SK-N-SH (cell line): ENCODE measurements at regions of chr10 and their contacts with region 1.

Region 1: DNA sequence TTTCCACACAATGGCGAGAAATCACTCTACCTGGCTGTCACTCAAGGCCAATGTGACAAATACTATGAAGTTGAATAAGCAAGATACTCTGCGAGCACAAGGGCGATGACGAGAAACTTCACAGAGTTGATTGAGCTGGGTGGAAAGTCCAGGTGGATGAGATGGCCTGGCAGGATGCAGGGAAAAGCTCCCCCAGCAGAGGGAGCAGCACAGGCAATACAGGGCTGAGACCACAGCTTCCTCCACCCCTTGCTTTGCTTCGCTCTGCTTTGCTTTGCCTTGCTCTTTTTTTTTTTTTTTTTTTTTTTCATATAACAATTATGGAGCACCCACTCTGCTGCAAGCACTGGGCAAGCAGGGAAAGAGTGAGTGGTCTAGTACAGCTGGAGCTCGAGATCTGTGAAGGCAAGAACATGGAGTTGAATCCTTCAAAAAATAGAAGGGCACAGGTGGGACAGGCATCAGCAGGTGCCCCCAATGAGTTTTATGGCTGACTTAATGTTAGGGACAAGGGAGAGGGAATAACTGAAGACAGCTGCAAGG is 88.3 kb downstream of the CABCOCO1 start:
- DNase-seq: peak; percentile 20
- H3K4me3 ChIP-seq: no peak overlapping the region
- H3K27ac ChIP-seq: no peak overlapping the region
- H3K4me1 ChIP-seq: peaks cover 26 to 40% of the 10 kb centered on the region in 2 experiments; a peak in 3 of 4 replicates
- H3K27me3 ChIP-seq: no peaks in the 10 kb centered on the region
- CTCF ChIP-seq: peak; percentile 66
- EP300 ChIP-seq: no peak
- RAD21 ChIP-seq: peak; percentile 64

Region 2: DNA sequence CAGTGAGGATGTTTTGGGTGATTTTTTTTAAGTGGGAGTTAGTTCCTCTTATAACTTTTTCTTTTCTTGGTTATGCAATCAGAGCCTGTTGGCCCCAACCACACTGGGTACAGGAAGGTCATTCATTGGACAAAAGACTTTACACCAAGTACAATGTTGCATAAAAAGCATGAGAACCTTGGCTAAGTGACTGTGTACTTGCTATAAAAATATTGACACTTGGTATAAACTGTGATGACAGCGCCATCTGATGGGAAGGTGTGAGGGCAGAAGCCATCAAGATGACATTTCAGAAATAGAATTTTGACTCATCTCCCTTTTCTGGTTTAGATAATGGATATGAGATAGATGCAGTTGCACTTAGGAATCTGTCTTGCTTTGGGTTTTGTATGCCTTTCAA is 1718.3 kb before region 1 on chr10:
- CTCF ChIA-PET with region 1: no interaction called
- POLR2A ChIA-PET with region 1: no interaction called
- DNase-seq: peak; percentile 37
- H3K4me3 ChIP-seq: no peak overlapping the region
- H3K27ac ChIP-seq: no peak overlapping the region
- H3K4me1 ChIP-seq: no peaks in the 10 kb centered on the region
- H3K27me3 ChIP-seq: no peaks in the 10 kb centered on the region
- CTCF ChIP-seq: peak; percentile 53
- EP300 ChIP-seq: no peak
- RAD21 ChIP-seq: peak; percentile 80

Region 3: DNA sequence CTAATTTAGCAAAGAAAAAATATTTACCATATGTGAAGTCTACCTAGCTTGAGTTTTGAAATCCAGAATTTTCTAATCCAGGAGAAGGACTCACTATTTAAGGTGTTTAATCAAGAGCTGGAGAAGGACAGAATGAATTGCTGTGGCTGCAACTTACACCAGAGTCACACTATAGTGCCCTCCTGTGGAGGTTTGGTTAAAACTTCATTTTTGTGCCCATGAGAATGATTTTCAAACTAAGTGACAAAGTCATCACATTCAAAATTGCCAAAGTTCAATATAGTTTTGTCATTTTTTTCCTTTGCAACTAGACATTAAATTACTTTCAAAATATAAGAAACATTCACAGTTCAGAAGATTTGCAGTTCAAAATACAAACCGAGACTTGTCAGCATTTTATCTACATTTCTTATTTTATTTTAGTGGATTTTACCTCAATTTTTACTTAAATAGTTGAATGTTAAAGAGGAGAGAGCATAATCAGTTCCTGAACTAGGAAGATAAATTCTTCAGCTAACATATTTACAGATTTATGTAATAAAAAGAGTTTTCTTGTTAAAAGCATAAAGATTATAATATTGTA is 17.6 kb before region 1 on chr10:
- CTCF ChIA-PET with region 1: interaction called, 44 read pairs
- POLR2A ChIA-PET with region 1: no interaction called
- DNase-seq: peak; percentile 29
- H3K4me3 ChIP-seq: no peak overlapping the region
- H3K27ac ChIP-seq: peak overlapping the region in 1 of 2 experiments; percentile 58; a peak in 1 of 4 replicates
- H3K4me1 ChIP-seq: peaks cover 0 to 9% of the 10 kb centered on the region in 2 experiments; a peak in 1 of 4 replicates
- H3K27me3 ChIP-seq: no peaks in the 10 kb centered on the region
- CTCF ChIP-seq: peak; percentile 77
- EP300 ChIP-seq: no peak
- RAD21 ChIP-seq: peak; percentile 85

Region 4: DNA sequence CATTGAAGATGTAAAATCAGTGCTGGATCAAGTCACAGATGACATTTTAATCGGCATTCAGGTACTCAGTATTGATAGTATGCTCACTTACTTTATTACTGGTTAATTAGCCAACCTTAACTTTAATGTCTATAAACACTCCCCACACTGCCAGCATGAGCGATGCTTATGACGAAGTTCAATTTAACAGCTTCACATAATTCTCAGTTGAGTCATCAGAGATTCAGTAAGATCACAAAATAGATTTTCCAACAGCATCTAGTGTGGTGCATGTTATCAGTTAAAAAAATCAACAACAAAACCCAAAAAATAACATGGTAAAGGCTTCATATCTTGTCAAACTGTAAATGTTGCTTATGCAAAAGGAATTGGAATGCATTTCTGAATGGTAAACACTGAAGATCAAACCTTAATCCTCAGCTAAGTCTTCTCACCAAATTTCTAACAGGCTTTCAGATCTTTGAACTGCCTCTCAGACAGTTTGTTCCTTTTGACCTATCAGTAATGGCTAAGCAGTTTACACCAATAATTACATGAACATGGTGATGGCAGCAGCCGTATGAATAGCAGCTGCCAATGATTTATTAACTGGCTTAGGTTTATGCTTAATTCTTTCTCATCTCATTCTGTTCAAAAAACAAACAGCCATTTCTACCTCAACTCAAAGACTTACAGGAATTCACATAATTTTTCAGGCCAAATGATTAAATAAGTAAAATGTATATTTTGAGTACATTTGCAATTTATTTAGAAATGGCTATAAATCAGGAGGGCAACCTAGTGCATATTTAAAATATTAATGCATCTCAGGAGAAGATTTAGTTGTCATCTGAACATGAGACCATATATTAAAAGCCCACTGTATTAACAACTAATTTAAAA is 10.2 kb after region 1 on chr10:
- CTCF ChIA-PET with region 1: interaction called, 14 read pairs
- POLR2A ChIA-PET with region 1: no interaction called
- DNase-seq: no peak
- H3K4me3 ChIP-seq: no peak overlapping the region
- H3K27ac ChIP-seq: peak overlapping the region; percentile 70 to 99
- H3K4me1 ChIP-seq: peaks cover 26 to 43% of the 10 kb centered on the region in 2 experiments; a peak in 3 of 4 replicates
- H3K27me3 ChIP-seq: no peaks in the 10 kb centered on the region
- CTCF ChIP-seq: no peak
- EP300 ChIP-seq: peak; percentile 13 to 75; a peak in 2 of 4 replicates
- RAD21 ChIP-seq: no peak

Region 5: GRCh38 chr10:61774031-61774430 is 23.0 kb after region 1 on chr10:
- CTCF ChIA-PET with region 1: no interaction called
- POLR2A ChIA-PET with region 1: no interaction called
- DNase-seq: no peak
- H3K4me3 ChIP-seq: no peak overlapping the region
- H3K27ac ChIP-seq: no peak overlapping the region
- H3K4me1 ChIP-seq: peaks cover 0 to 5% of the 10 kb centered on the region in 2 experiments; a peak in 2 of 4 replicates
- H3K27me3 ChIP-seq: no peaks in the 10 kb centered on the region
- CTCF ChIP-seq: no peak
- EP300 ChIP-seq: no peak
- RAD21 ChIP-seq: no peak

Region 6: GRCh38 chr10:61835069-61835945 is 84.3 kb after region 1 on chr10:
- CTCF ChIA-PET with region 1: interaction called, 13 read pairs
- POLR2A ChIA-PET with region 1: no interaction called
- DNase-seq: peak; percentile 15
- H3K4me3 ChIP-seq: peak overlapping the region in 1 of 2 experiments; percentile 39; a peak in 1 of 4 replicates
- H3K27ac ChIP-seq: peak overlapping the region; percentile 89 to 93
- H3K4me1 ChIP-seq: peaks cover 21 to 29% of the 10 kb centered on the region in 2 experiments
- H3K27me3 ChIP-seq: no peaks in the 10 kb centered on the region
- CTCF ChIP-seq: peak; percentile 69
- EP300 ChIP-seq: peak in 1 of 2 experiments; percentile 65; a peak in 2 of 4 replicates
- RAD21 ChIP-seq: peak; percentile 77

Region 7: GRCh38 chr10:61903221-61903927 is 152.4 kb after region 1 on chr10:
- CTCF ChIA-PET with region 1: interaction called, 15 read pairs
- POLR2A ChIA-PET with region 1: no interaction called
- DNase-seq: peak; percentile 78
- H3K4me3 ChIP-seq: peak overlapping the region; percentile 67 to 84
- H3K27ac ChIP-seq: peak overlapping the region; percentile 87 to 95
- H3K4me1 ChIP-seq: peaks cover 15 to 22% of the 10 kb centered on the region in 2 experiments; a peak in 3 of 4 replicates
- H3K27me3 ChIP-seq: no peaks in the 10 kb centered on the region
- CTCF ChIP-seq: peak; percentile 43
- EP300 ChIP-seq: no peak
- RAD21 ChIP-seq: no peak; the same call in 1 of the 2 replicates